ENCODE measurements at regions of chr2 and their contacts with region 1.

Region 1: GRCh38 chr2:85327822-85328617 is at the start of gene TGOLN2:
- DNase-seq: peak; percentile 96
- H3K4me3 ChIP-seq: peak within 1 kb of the TSS; percentile 93
- H3K27ac ChIP-seq: peak within 1 kb of the TSS; percentile 73
- H3K4me1 ChIP-seq: peaks cover 26% of the 10 kb centered on the region
- CTCF ChIP-seq: no peak
- total RNA-seq, gene TGOLN2: 74.4 and 78.6 TPM in 2 replicates

Region 2: DNA sequence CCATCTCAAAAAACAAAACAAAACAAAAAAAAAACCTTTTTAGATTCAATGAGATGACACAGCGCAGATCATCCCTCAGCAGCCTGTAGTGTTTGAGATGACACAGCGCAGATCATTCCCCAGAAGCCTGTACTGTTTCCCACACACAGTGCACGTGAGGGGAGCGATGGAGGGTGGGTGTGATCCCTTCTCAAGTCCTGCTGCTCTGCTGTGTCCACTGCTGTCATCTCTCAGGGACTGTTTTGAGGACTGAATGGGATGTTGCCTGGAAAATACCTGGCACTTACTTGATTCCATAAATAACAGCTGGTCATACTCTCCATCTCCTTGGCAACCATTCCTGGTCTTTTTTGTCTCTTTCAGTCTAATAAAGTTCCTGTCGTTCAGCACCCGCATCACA is 25.9 kb before region 1 on chr2:
- CTCF ChIA-PET with region 1: no interaction called
- POLR2A ChIA-PET with region 1: interaction called, 4 read pairs
- intact Hi-C with region 1: loop called (anchors 1 kb)
- DNase-seq: no peak
- H3K4me3 ChIP-seq: no peak overlapping the region
- H3K27ac ChIP-seq: no peak overlapping the region
- H3K4me1 ChIP-seq: no peaks in the 10 kb centered on the region
- CTCF ChIP-seq: no peak

Region 3: GRCh38 chr2:85344356-85344954 is 16.4 kb after region 1 on chr2:
- CTCF ChIA-PET with region 1: interaction called, 11 read pairs
- POLR2A ChIA-PET with region 1: interaction called, 5 read pairs
- intact Hi-C with region 1: no loop called
- DNase-seq: no peak
- H3K4me3 ChIP-seq: no peak overlapping the region
- H3K27ac ChIP-seq: no peak overlapping the region
- H3K4me1 ChIP-seq: no peaks in the 10 kb centered on the region
- CTCF ChIP-seq: no peak

Region 4: DNA sequence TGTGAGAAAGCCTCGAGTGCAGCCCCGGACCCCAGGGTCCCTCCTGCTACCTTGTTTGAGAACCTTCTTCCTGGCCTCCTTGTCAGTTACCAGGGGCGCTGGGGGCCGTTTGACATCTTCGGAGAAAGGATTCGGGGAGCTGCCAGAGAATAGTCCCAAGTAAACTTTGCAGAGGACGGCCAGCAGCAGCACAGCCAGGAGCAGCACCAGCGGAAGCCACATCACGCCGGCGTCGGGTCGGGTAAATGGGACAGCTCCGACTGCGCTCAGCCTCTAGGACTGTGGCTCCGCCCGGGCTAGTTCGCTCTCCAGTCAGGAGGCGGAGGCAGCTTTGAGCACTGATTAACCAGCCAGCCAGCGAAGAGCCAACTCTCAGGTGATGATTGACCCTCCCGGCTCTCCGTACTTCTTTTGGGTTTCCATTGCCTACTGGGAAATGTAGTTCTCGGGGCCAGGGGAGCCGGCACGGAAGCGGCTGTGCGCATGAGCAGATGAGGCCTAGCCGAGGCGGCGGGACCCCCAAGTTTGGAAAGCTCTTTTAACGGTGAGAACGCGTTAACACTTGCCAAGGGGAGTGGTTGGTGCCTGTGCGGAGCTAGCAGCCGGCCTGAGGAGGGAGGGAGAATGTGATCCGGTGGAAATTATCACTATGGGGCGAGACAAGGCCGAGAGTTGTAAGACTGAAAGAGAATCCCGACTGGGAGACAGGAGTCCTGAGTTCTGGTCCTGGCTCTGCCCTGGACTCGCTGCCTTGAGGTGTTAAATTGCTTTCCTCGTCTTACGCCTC is 26.5 kb after region 1 on chr2 and contains the starts of genes ELMOD3 and RETSAT:
- CTCF ChIA-PET with region 1: no interaction called
- POLR2A ChIA-PET with region 1: interaction called, 12 read pairs
- intact Hi-C with region 1: loop called (anchors 1 kb)
- DNase-seq: peak; percentile 99
- H3K4me3 ChIP-seq: peak within 1 kb of the TSS; percentile 75
- H3K27ac ChIP-seq: peak within 1 kb of the TSS; percentile 7
- H3K4me1 ChIP-seq: peaks cover 20% of the 10 kb centered on the region
- CTCF ChIP-seq: no peak
- total RNA-seq, gene ELMOD3: 12.0 and 22.1 TPM in 2 replicates
- total RNA-seq, gene RETSAT: 5.9 and 14.1 TPM in 2 replicates

Measured in OCI-LY7 (cell line).